ENCODE measurements at regions of chr6 and their contacts with region 1.

Region 1: DNA sequence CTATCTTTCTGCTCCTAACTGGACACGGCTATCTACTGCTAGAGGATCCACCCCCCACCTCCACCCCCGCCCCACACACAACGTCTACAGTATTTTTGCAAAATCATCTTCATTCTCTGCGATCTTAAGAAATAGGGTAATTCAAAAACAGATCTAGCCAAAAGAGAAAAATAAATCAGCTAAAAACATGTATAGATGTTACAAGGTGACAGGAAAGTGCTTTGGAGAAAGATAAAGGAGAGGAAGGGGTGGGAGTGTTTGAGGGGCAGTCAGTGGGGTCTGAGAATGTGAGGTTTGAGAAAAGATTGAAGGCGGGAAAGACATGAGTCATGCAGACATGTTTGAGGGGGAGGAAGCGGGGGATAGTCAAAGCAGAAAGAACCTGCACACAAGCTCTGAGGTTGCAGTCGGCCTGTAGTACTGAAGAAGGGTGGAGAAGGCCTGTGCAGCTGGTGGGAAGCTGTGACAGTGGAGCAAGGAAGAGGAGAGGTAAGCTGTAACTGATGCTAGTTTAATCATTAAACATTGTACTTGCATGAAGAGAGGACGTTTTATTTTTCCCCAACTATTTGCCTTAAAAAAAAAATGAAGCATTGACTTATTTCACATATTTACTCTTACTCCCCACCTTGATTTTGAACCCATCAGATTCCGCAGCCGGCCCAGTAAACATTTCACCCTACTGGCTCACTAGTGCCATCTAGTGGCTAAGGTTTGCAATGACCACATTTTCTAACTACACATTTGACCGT is 332.6 kb downstream of the ADGRB3 start:
- DNase-seq: peak; percentile 8 to 55 (median 32)
- ATAC-seq: peak; percentile 80
- H3K4me3 ChIP-seq: no peak overlapping the region
- H3K4me3 Mint-ChIP-seq: no peak overlapping the region
- H3K27ac ChIP-seq: no peak overlapping the region
- H3K27ac Mint-ChIP-seq: no peak overlapping the region
- H3K4me1 ChIP-seq: no peaks in the 10 kb centered on the region
- H3K4me1 Mint-ChIP-seq: peaks cover 0 to 4% (median 0%) of the 10 kb centered on the region in 7 donors
- H3K27me3 ChIP-seq: no peaks in the 10 kb centered on the region
- H3K27me3 Mint-ChIP-seq: peaks cover 0 to 9% (median 3%) of the 10 kb centered on the region in 5 donors

Region 2: DNA sequence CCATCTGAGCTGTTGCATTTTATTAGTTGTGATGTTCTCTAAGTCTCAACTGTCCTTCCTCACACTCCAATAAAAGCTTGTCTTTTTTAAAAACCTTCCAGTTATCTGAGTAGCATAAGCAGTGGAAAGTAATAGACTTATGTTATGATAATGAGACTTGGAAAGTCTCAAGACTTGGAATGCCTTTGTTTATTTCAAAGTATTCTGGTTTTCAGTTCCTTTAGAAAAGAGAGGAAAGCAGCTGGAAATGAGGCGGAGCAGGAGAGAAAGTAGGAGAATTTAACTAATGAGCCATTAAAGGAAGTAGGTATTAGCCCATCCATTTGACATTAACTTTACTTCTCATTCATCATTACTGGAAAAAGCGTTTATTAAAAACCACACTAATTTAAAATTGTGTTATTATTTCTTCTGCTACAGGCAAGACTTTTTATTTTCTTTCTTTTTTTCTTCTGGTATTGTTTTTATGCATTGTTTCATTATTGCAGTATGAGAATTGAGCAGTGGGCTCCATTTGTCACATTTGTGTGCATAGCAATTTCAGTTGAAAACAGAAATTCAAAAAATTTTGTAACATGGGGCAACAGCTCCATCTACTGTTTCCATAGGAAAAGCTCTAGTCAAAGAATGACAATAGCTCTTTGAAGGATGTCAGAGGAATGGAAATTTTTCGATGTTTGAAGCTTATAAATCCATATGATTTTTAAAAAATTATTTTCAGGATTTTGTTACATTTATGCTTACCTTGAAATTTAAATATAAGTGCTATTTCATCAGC is 1140.3 kb after region 1 on chr6:
- CTCF ChIA-PET with region 1: no interaction called
- POLR2A ChIA-PET with region 1: no interaction called
- intact Hi-C with region 1: loop called in 1 of 2 experiments (anchors 10 kb)
- DNase-seq: peak in 6 of 9 donors; percentile 4 to 43 (median 17)
- ATAC-seq: no peak
- H3K4me3 ChIP-seq: no peak overlapping the region
- H3K4me3 Mint-ChIP-seq: no peak overlapping the region
- H3K27ac ChIP-seq: no peak overlapping the region
- H3K27ac Mint-ChIP-seq: no peak overlapping the region
- H3K4me1 ChIP-seq: no peaks in the 10 kb centered on the region
- H3K4me1 Mint-ChIP-seq: no peaks in the 10 kb centered on the region
- H3K27me3 ChIP-seq: no peaks in the 10 kb centered on the region
- H3K27me3 Mint-ChIP-seq: peaks cover 0 to 21% (median 14%) of the 10 kb centered on the region in 5 donors

Measured in naive thymus-derived CD4-positive, alpha-beta T cell (primary cell).